ENCODE measurements at regions of chr13 and their contacts with region 1.

Region 1: GRCh38 chr13:24228852-24229458 is 68.4 kb downstream of the SPATA13 start:
- DNase-seq: peak; percentile 52
- H3K4me3 ChIP-seq: no peak overlapping the region
- H3K27ac ChIP-seq: no peak overlapping the region
- H3K27me3 ChIP-seq: no peaks in the 10 kb centered on the region
- CTCF ChIP-seq: peak; percentile 90

Region 2: DNA sequence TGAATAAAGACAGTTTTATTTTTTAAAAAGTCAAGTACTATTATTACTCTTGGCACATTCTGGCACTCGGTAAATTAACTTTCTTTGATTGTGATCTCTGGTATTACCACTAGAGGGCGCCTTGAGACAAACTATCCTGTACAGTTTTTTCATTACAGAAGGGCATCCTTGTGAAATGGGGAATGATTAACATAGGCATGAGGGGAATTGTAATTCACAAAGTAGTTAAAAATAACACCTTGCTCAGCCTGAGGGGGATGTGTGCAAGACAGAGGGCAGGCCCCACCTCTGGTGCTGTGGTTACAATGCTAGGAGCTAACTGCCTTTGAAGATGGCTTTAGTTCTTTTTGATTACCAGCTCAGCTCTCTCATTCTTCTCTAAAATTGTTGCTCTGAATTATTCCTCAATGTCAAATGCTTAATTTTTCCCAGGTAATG is 307.5 kb before region 1 on chr13:
- CTCF ChIA-PET with region 1: interaction called, 21 read pairs
- POLR2A ChIA-PET with region 1: no interaction called
- DNase-seq: peak; percentile 6
- H3K4me3 ChIP-seq: no peak overlapping the region
- H3K27ac ChIP-seq: no peak overlapping the region
- H3K27me3 ChIP-seq: no peaks in the 10 kb centered on the region
- CTCF ChIP-seq: peak; percentile 72

Region 3: DNA sequence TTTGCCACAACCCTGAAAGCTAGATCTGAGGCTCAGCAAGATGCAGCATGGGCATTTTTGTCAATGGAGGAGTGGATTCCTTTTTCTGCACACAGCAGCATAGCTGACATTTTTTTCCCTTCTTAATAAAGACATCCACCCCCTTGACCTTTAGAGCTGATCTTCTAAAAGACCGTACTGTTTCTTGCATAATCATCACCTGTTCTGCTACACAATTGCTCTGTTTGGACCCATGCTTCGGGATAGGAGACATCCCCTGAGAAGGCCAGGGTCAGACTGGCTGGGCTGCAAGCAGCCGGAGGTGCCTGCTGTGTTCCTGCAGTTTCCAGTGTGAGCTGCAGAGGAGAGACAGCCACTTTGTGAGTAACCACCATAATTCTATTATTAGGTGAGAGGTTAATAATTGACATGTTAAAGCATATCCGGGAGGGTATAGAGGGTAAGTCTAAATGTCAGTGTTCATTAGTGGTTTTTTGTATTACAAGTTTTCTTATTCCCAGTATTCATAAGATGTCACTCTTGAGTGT is 223.1 kb before region 1 on chr13:
- CTCF ChIA-PET with region 1: interaction called, 12 read pairs
- POLR2A ChIA-PET with region 1: interaction called, 5 read pairs
- DNase-seq: no peak
- H3K4me3 ChIP-seq: no peak overlapping the region
- H3K27ac ChIP-seq: no peak overlapping the region
- H3K27me3 ChIP-seq: no peaks in the 10 kb centered on the region
- CTCF ChIP-seq: no peak

Region 4: DNA sequence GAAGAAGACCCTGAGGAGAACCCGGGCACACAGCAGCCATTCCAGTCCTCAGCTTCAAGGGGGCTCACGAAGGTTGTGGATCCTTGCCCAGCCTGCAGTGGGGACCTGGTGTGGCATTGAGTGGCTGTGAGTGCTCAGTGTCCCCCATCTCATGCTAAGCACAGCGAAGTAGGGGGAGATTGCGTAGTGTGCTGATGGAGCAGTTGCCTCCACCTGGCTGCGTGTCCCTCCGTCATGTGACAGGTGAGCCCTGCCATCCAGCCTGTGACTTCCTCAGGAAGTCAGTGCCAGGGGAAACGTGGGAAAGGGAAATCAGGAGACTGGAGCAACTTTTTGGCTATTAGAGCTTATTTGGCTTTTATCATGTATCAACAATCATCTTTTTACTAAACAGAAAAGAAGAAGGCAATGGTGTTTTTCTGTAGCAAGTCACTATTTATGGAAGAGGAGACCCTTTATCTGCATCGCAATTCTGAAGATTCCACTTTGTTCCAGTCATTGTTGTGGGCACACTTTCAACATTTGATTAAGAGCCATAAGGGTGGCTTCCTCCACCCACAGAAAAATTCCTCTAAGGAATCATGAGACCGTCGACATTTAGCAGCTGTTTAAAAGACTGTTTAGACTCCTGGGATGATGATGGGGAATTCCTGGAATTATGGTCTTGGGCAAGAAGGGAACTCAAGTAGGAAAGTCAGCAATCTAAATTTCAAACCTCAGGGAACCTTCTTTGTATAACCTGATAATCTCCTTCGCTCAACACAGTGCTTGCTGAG is 195.2 kb before region 1 on chr13:
- CTCF ChIA-PET with region 1: interaction called, 13 read pairs
- POLR2A ChIA-PET with region 1: no interaction called
- DNase-seq: peak; percentile 88
- H3K4me3 ChIP-seq: no peak overlapping the region
- H3K27ac ChIP-seq: peak overlapping the region; percentile 88
- H3K27me3 ChIP-seq: no peaks in the 10 kb centered on the region
- CTCF ChIP-seq: no peak

Region 5: GRCh38 chr13:24212674-24213073 is 16.3 kb before region 1 on chr13:
- CTCF ChIA-PET with region 1: interaction called, 31 read pairs
- POLR2A ChIA-PET with region 1: no interaction called
- DNase-seq: no peak
- H3K4me3 ChIP-seq: no peak overlapping the region
- H3K27ac ChIP-seq: no peak overlapping the region
- H3K27me3 ChIP-seq: no peaks in the 10 kb centered on the region
- CTCF ChIP-seq: no peak

Region 6: GRCh38 chr13:24257497-24257896 is 28.5 kb after region 1 on chr13:
- CTCF ChIA-PET with region 1: interaction called, 11 read pairs
- POLR2A ChIA-PET with region 1: no interaction called
- DNase-seq: no peak
- H3K4me3 ChIP-seq: no peak overlapping the region
- H3K27ac ChIP-seq: no peak overlapping the region
- H3K27me3 ChIP-seq: no peaks in the 10 kb centered on the region
- CTCF ChIP-seq: no peak

Region 7: GRCh38 chr13:24389506-24389905 is 160.6 kb after region 1 on chr13:
- CTCF ChIA-PET with region 1: no interaction called
- POLR2A ChIA-PET with region 1: no interaction called
- DNase-seq: no peak
- H3K4me3 ChIP-seq: no peak overlapping the region
- H3K27ac ChIP-seq: no peak overlapping the region
- H3K27me3 ChIP-seq: peaks cover 3% of the 10 kb centered on the region
- CTCF ChIP-seq: no peak